Mammary epithelial cell (primary cell): ENCODE measurements at regions of chr11 and their contacts with region 1.

Region 1: GRCh38 chr11:109547356-109548027 is 125.5 kb downstream of the C11orf87 start:
- DNase-seq: peak; percentile 42
- H3K4me3 ChIP-seq: no peak overlapping the region
- H3K27ac ChIP-seq: peak overlapping the region; percentile 34
- H3K4me1 ChIP-seq: peaks cover 7% of the 10 kb centered on the region
- H3K27me3 ChIP-seq: no peaks in the 10 kb centered on the region
- CTCF ChIP-seq: no peak

Region 2: GRCh38 chr11:109597336-109597735 is 49.8 kb after region 1 on chr11:
- CTCF ChIA-PET with region 1: no interaction called
- dilution Hi-C with region 1: loop called (anchors 5 kb)
- in situ Hi-C with region 1: no loop called
- intact Hi-C with region 1: no loop called
- DNase-seq: no peak
- H3K4me3 ChIP-seq: no peak overlapping the region
- H3K27ac ChIP-seq: no peak overlapping the region
- H3K4me1 ChIP-seq: no peaks in the 10 kb centered on the region
- H3K27me3 ChIP-seq: no peaks in the 10 kb centered on the region
- CTCF ChIP-seq: no peak

Region 3: GRCh38 chr11:109619498-109619897 is 72.0 kb after region 1 on chr11:
- CTCF ChIA-PET with region 1: no interaction called
- dilution Hi-C with region 1: no loop called
- in situ Hi-C with region 1: no loop called
- intact Hi-C with region 1: loop called (anchors 5 kb)
- DNase-seq: peak; percentile 94
- H3K4me3 ChIP-seq: no peak overlapping the region
- H3K27ac ChIP-seq: peak overlapping the region; percentile 52
- H3K4me1 ChIP-seq: peaks cover 22% of the 10 kb centered on the region
- H3K27me3 ChIP-seq: no peaks in the 10 kb centered on the region
- CTCF ChIP-seq: no peak

Region 4: DNA sequence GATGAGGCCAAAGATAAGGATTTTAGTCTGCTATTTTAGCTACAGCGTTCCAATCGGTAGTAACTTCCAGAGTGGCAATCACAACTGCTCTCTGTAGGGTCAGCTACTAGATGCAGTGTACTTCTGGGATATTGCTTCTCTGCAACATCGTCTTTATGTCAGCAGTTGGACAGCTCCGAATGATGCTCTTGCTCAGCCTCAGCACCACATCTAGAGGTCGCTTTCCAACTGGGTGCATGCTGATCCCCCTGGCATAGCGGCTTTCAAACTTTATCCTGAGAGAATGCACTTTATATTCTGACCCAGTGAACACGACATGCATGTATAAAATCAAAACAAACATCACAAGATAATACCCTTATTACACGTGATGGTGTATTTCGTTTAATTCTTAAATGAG is 94.1 kb after region 1 on chr11:
- CTCF ChIA-PET with region 1: no interaction called
- dilution Hi-C with region 1: no loop called
- in situ Hi-C with region 1: no loop called
- intact Hi-C with region 1: loop called (anchors 10 kb)
- DNase-seq: peak; percentile 50
- H3K4me3 ChIP-seq: no peak overlapping the region
- H3K27ac ChIP-seq: no peak overlapping the region
- H3K4me1 ChIP-seq: no peaks in the 10 kb centered on the region
- H3K27me3 ChIP-seq: no peaks in the 10 kb centered on the region
- CTCF ChIP-seq: peak; percentile 26 to 55